Colonic mucosa (tissue), 4 donors: ENCODE measurements at regions of chr12 and their contacts with region 1.

Region 1: DNA sequence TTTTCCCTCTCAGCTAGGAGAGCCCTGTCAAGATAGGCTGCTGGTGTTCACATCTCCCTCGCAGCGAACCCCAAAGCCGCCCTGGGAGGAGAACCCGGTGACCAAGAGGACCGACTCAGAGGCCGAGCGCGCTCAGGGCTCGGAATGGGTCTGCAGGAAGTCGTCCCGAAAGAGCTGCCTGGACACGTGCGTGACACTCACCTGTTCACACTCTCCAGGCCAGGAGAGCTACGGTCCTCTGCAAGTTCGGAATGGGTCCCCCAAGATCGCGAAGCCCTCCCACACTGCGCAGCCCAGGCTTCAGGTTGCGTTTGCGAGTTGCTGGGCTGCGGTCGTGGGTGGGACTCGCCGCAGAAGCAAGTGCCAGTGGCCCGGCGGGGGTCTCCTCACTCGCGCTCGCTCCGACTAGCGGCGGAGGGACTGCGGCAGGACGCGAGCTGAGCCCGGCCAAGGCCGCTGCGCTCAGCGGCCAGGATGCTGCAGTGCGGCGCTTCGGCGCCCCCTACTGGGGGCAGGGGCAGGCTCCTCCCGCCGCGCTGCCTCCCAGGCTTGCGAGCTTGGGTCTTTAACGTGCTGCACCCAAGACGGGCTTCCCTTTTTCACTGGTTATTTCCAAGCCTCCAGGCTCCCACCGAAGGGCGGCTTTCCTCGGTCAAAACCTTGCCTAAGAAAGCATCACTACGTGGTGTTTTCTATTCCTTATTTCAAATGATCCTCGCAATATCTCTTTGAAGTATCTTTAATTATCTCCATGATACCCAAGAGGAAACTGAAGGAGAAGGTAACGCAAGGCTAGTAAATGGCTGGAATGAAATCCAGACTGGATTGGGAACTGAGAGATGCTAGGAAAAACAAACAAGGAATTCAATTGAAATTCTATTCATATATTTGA is at the start of gene RERG:
- DNase-seq: peak; percentile 80
- H3K4me3 ChIP-seq: peak within 1 kb of the TSS; percentile 32
- H3K27ac ChIP-seq: peak within 1 kb of the TSS; percentile 54
- H3K4me1 ChIP-seq: no peaks in the 10 kb centered on the region
- H3K27me3 ChIP-seq: no peaks in the 10 kb centered on the region
- CTCF ChIP-seq: peak; percentile 92
- total RNA-seq, gene RERG: 0.84 to 5.3 TPM

Region 2: GRCh38 chr12:14995583-14996425 is 225.4 kb before region 1 on chr12:
- intact Hi-C with region 1: loop called (anchors 5 kb)
- DNase-seq: no peak
- H3K4me3 ChIP-seq: no peak overlapping the region
- H3K27ac ChIP-seq: no peak overlapping the region
- H3K4me1 ChIP-seq: no peaks in the 10 kb centered on the region
- H3K27me3 ChIP-seq: no peaks in the 10 kb centered on the region
- CTCF ChIP-seq: peak; percentile 60

Region 3: GRCh38 chr12:15088105-15088504 is 133.1 kb before region 1 on chr12:
- intact Hi-C with region 1: no loop called
- DNase-seq: no peak
- H3K4me3 ChIP-seq: no peak overlapping the region
- H3K27ac ChIP-seq: no peak overlapping the region
- H3K4me1 ChIP-seq: no peaks in the 10 kb centered on the region
- H3K27me3 ChIP-seq: no peaks in the 10 kb centered on the region
- CTCF ChIP-seq: no peak

Region 4: DNA sequence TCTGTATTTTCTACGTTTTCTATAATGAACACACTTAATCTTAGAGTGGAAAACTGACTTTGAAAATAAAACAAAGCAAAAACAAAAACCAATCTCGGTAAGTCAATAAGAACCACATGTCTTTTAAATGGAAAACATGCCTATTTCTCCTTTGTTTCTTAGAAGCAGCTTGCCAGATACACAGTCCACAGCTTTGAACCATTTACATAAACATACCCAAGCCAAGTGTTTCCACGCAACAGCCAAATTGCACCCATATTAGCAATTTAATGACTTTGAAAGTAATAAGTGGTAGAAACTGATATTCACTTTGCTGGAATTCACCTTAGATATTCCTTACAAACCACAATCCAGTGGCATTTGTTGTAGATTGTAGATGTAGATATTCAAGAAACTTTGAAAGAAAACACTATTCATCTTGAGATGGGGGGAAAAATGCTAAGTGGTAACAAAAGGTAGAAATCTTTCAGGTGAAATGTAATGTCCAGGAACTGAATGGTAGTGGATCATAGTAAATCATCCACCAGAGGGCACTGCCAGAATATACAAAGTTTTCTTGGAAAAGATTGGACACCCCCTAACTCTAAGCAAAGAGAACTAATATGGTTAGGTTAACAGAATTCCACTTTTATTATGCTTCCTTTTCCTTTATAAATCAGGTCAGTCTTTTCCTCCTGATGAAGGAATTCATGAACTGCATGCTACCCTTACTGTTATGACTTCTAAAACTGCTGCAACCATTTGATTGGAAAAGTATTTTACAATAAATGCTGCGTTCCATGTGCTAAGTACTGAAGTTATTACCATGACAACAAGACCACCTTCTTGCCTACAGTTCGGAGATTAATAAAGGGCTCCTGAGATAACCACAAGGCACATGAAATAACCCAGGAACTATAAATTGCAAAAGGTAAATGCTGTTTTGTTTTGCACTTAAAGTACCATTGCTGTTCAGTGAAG is 69.8 kb before region 1 on chr12:
- intact Hi-C with region 1: loop called (anchors 5 kb)
- DNase-seq: no peak
- H3K4me3 ChIP-seq: no peak overlapping the region
- H3K27ac ChIP-seq: peak overlapping the region; percentile 2
- H3K4me1 ChIP-seq: no peaks in the 10 kb centered on the region
- H3K27me3 ChIP-seq: no peaks in the 10 kb centered on the region
- CTCF ChIP-seq: peak; percentile 26

Region 5: DNA sequence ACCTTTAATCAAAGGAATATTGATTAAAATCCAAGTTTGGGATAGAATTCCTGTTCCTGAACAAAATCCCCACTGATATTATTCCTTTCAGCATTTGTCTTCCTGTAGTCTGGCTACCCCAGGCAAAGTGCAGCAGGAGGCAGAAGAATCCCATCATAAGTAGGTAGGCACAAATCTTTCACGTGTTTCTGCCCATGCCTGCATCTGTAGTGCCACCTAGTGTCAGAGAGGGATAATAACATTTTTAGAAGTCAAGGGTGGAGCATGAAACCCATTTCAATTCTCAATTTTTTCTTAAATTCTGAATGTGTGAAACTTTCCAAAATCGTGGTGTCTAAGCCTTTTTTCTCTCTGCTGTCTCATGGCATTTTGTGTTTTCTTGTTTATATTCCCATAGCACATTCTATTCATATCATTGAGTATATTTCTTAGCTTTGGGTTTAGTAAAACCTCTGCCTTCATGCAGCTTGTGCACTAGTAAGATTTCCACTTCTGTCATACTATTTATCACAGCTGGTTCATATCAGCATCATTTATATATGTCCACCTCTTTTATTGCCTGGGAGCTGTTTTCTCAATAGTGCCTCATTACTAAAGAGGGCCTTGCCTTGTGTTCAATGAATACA is 47.8 kb after region 1 on chr12:
- intact Hi-C with region 1: loop called (anchors 5 kb)
- DNase-seq: peak; percentile 32
- H3K4me3 ChIP-seq: no peak overlapping the region
- H3K27ac ChIP-seq: no peak overlapping the region
- H3K4me1 ChIP-seq: no peaks in the 10 kb centered on the region
- H3K27me3 ChIP-seq: no peaks in the 10 kb centered on the region
- CTCF ChIP-seq: peak; percentile 84